Heart left ventricle (tissue), 16 donors: ENCODE measurements at regions of chr4 and their contacts with region 1.

Region 1: DNA sequence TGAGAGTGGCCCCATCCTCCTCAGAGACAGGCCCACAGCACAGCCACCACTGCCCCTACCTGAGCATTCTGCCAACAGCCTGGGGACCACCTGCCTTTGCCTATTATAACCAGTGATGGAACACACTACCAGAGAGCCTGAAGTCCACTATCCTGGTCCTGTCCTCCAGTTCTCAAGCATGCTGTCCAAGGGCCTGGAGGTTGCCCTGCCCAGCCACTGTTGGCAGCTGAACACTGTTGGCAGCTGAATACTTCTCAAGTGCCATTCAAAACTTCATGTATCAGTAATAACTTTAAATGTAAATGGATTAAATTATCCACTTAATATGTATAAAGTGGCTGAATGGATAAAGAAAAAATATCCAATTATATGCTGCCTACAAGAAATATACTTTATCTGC is 194.3 kb upstream of the JADE1 start:
- DNase-seq: no peak
- ATAC-seq: peak in 1 of 4 donors; percentile 11
- H3K4me3 ChIP-seq: no peak overlapping the region
- H3K27ac ChIP-seq: no peak overlapping the region
- H3K4me1 ChIP-seq: no peaks in the 10 kb centered on the region
- H3K27me3 ChIP-seq: no peaks in the 10 kb centered on the region
- CTCF ChIP-seq: no peak
- POLR2A ChIP-seq: no peak

Region 2: DNA sequence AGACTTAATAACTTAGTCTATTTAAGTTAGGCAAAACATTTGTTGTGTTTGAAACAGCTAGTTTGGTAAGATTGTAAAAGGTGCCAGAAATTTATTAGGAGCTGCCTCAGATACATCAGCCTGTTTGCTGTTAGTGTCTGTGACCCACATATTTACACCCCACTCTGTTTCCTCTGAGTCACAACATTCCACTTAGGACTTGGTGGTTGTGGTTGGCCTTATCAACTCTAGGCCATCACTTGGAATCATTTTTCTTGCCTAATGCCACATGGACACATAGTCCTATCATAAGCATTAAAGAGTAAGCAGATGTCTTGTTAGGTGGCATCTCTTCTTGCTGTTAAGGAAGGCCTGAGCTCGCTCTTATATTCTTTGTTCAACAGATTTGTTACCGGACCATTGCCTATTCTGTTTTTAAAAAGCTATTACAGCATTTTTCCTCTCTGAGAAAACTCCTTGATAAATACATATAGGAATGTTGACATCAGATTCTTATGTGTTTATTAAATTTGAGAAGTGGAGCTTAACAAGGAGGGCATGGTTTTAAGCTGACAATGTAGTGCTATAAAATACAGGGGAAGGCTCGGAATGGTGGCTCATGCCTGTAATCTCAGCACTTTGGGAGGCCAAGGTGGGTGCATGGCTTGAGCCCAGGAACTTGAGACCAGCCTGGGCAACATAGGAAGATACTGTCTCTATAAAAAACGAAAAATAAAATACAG is 276.4 kb before region 1 on chr4:
- intact Hi-C with region 1: no loop called
- DNase-seq: no peak
- ATAC-seq: peak in 1 of 4 donors; percentile 26
- H3K4me3 ChIP-seq: no peak overlapping the region
- H3K27ac ChIP-seq: no peak overlapping the region
- H3K4me1 ChIP-seq: peaks cover 0 to 11% (median 0%) of the 10 kb centered on the region in 12 donors
- H3K27me3 ChIP-seq: no peaks in the 10 kb centered on the region
- CTCF ChIP-seq: no peak
- POLR2A ChIP-seq: no peak

Region 3: DNA sequence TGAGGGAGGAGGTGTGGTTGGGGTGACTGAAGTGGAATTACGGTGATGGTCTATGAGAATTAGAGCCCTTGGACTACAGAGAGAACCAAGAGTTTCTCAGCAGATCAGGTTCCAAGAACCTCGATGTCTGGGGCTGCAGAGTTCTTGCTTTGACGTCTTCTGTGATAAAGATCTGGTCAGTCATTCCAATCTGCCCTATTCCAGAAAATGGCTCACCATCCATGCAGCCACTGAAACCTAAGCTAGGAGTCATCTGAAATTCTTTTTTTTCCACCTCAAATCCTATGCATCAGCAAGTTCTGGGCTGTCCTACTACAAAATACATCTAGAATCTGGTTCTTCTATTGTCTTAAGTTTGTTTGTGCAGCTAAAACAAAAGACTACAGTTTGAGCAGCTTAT is 73.2 kb before region 1 on chr4:
- intact Hi-C with region 1: loop called in 1 of 10 experiments (anchors 2 kb)
- DNase-seq: no peak
- ATAC-seq: no peak
- H3K4me3 ChIP-seq: no peak overlapping the region
- H3K27ac ChIP-seq: no peak overlapping the region
- H3K4me1 ChIP-seq: peaks cover 0 to 10% (median under 1%) of the 10 kb centered on the region in 12 donors
- H3K27me3 ChIP-seq: no peaks in the 10 kb centered on the region
- CTCF ChIP-seq: no peak
- POLR2A ChIP-seq: no peak